Caco-2 (cell line): ENCODE measurements at regions of chr17 and their contacts with region 1.

Region 1: DNA sequence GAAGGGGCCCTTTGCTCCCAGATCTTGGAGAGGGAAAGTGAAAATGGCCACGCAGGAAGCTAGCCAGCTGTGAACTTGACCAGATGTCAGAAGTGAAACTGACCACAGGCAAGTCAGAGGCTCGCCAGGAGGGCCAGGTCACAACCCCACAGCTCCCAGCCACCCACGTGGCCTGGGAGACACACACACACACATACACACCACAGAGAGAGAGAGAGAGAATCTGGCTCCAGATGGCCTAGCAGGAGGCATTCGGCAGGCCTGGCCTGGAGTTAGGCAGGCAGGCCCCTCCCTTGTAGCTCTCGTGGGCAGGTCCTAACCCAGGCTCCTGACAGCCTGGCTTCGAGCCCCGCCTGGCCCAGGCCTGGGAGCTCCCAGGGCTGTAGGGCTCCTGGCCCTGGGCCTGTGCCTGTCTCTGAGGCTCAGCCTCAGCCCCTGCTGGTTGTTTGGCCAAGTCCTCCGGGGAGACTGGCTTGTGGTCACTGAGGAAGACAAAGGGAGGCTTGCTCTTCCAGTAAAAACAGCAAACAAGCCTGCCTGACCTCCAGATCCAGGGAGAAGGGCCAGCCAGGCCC is 20.2 kb downstream of the NGFR start:
- DNase-seq: peak; percentile 62 to 63
- H3K4me3 ChIP-seq: no peak overlapping the region
- H3K4me3 Mint-ChIP-seq: no peak overlapping the region
- H3K27ac Mint-ChIP-seq: peak overlapping the region; percentile 5
- H3K4me1 ChIP-seq: no peaks in the 10 kb centered on the region
- H3K4me1 Mint-ChIP-seq: peaks cover 20% of the 10 kb centered on the region
- H3K27me3 ChIP-seq: no peaks in the 10 kb centered on the region
- H3K27me3 Mint-ChIP-seq: peaks cover 8% of the 10 kb centered on the region
- CTCF ChIP-seq: no peak

Region 2: DNA sequence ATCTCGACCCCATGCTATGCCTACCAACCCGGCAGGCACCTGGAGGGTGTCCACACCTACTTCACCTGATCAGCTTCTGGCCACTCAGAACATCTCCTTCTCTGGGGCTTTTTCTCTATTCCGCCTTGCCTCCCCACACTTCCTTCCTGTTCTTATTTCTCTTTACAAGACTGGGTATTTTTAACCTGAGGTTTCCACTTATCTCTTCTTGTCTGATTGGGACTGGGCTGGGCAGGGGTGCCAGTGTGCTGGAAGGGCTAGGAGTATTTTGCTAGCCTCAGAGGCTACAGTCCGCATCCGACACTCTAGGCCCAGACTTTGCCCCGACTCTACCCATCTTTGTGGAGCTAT is 127.0 kb before region 1 on chr17:
- CTCF ChIA-PET with region 1: no interaction called
- POLR2A ChIA-PET with region 1: no interaction called
- intact Hi-C with region 1: no loop called
- DNase-seq: no peak
- H3K4me3 ChIP-seq: no peak overlapping the region
- H3K4me3 Mint-ChIP-seq: no peak overlapping the region
- H3K27ac Mint-ChIP-seq: no peak overlapping the region
- H3K4me1 ChIP-seq: peaks cover 9% of the 10 kb centered on the region; the same call in 1 of the 2 replicates
- H3K4me1 Mint-ChIP-seq: no peaks in the 10 kb centered on the region
- H3K27me3 ChIP-seq: no peaks in the 10 kb centered on the region
- H3K27me3 Mint-ChIP-seq: no peaks in the 10 kb centered on the region
- CTCF ChIP-seq: no peak

Region 3: DNA sequence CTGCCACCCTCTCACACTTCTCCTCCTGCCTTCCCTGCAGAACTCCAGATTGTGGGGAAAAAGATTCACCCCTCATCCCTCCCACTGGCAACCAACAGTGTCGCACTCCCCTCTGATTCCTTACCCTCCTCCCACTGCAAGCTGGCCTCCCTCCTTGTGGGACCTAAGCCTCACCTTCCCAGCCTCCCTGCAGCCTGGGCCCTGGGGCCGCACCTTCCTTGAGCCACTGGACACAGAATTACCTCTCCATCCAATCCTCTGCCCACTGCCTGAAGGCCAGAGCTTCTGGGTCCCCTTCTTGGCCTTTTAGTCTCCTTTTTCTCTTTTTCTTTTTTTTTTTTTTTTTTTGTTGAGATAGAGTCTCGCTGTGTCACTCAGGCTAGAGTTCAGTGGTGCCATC is 13.7 kb after region 1 on chr17:
- CTCF ChIA-PET with region 1: interaction called, 11 read pairs
- POLR2A ChIA-PET with region 1: no interaction called
- intact Hi-C with region 1: no loop called
- DNase-seq: peak in 1 of 2 experiments; percentile 32
- H3K4me3 ChIP-seq: no peak overlapping the region
- H3K4me3 Mint-ChIP-seq: no peak overlapping the region
- H3K27ac Mint-ChIP-seq: no peak overlapping the region
- H3K4me1 ChIP-seq: no peaks in the 10 kb centered on the region
- H3K4me1 Mint-ChIP-seq: no peaks in the 10 kb centered on the region
- H3K27me3 ChIP-seq: no peaks in the 10 kb centered on the region
- H3K27me3 Mint-ChIP-seq: peaks cover 25% of the 10 kb centered on the region
- CTCF ChIP-seq: no peak